ENCODE measurements at regions of chr19 and their contacts with region 1.

Region 1: DNA sequence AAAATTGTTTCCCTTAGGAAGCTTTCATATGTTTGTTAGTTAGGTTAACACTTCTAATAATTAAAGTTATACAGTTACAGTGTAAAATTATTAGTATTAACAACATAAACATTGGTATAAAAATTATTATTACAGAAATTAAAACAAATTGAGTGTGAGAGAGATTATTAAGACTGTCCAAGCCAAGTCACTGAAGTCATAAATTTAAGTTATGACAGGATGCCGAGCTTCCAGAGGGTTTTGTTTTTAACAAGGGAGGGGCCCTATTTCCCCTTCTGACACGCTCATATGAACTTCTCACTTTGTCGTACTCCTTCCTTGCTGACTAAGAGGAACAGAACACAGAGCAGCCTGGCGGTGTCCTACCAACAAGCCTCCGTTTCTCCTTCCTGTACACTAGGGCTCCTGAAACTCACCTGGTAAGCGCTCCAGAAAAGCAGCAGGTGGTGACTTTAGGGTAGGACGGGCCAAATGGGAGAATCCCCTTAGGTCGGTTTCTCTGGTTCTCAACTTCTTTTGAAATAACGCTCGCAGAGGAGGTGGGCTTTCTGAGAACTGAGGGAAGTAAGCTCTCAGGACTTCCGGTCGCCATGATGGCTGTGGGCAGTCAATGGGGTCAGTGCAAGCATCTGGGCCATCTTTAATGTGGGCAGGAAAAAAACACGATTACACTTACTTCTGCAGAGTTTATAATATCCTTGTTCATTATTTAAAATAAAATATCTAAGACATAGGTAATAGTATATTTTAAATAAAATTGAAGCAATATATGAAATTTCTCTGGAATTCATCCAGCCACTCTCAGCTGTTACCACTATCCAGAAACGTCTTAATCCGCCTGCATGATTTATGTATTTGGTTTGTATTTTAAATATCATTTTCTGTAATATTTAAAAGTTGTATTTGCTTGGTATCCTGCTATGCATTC is at the start of gene CARD8:
- DNase-seq: peak; percentile 43 to 92
- H3K4me3 ChIP-seq: peak within 1 kb of the TSS; percentile 71 to 79
- H3K27ac ChIP-seq: peak within 1 kb of the TSS; percentile 90 to 91
- H3K4me1 ChIP-seq: peaks cover 0 to 15% of the 10 kb centered on the region in 2 donors
- H3K27me3 ChIP-seq: no peaks in the 10 kb centered on the region
- CTCF ChIP-seq: no peak
- total RNA-seq, gene CARD8: 41.0 TPM

Region 2: GRCh38 chr19:48110350-48110966 is 145.2 kb before region 1 on chr19 and contains the start of gene PLA2G4C:
- intact Hi-C with region 1: loop called (anchors 5 kb)
- DNase-seq: peak; percentile 75 to 95
- H3K4me3 ChIP-seq: peak within 1 kb of the TSS; percentile 56 to 59
- H3K27ac ChIP-seq: peak within 1 kb of the TSS; percentile 91 to 93
- H3K4me1 ChIP-seq: peaks cover 0 to 17% of the 10 kb centered on the region in 2 donors
- H3K27me3 ChIP-seq: no peaks in the 10 kb centered on the region
- CTCF ChIP-seq: no peak
- total RNA-seq, gene PLA2G4C: 110 TPM

Region 3: GRCh38 chr19:48170038-48170812 is 85.4 kb before region 1 on chr19 and contains the starts of genes LIG1 and ZSWIM9:
- intact Hi-C with region 1: loop called (anchors 2 kb)
- DNase-seq: peak; percentile 65 to 93
- H3K4me3 ChIP-seq: peak within 1 kb of the TSS; percentile 65 to 85
- H3K27ac ChIP-seq: peak within 1 kb of the TSS; percentile 82 to 88
- H3K4me1 ChIP-seq: peaks cover 3 to 7% of the 10 kb centered on the region in 2 donors
- H3K27me3 ChIP-seq: no peaks in the 10 kb centered on the region
- CTCF ChIP-seq: peak in 1 of 3 experiments; percentile 14
- total RNA-seq, gene LIG1: 0.64 TPM
- total RNA-seq, gene ZSWIM9: 16.0 TPM

Region 4: DNA sequence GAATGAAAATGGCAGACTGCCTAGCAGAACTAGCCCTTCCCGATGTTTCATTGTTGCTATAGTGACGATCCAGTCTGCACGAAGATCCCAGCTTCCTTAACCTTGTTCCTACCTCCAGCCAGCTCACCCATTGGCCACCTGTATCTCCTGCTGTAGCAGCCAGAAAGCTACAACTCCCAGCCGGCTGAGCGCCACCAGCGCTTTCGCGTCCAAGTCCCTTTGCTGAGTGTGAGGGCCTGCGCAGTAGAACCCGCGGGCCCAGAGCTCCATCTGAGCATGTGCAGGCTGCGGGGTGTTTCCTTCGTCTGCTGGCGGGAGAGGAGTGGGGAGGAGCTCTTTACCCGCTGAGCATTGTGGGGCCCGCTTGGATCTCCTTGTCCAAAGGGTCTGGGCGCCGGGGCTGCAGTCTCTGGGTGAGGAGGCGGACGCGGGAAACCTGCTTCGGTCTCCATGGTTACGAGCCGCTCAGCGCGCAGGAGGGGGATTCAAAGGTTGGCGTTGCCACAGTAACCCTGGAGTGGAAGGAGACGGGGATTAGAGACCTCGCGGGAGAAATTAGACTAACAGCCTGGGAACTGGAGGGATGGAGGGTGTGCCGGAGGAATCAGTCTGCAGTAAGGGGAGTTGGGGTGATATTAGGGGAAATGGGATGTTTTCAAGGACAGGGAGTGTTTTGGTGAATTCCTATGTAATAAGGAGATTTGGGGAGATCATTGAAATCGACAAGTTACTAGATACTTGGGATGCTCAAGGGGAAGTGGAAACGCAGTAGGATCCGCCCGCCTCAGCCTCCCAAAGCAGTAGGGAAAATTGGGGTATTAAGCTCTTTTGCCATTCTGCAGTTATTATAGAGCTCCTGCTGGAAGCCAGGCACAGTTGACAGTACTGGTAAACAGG is 51.7 kb before region 1 on chr19:
- intact Hi-C with region 1: loop called (anchors 2 kb)
- DNase-seq: peak; percentile 68 to 96
- H3K4me3 ChIP-seq: peak overlapping the region; percentile 50 to 88
- H3K27ac ChIP-seq: peak overlapping the region; percentile 43 to 53
- H3K4me1 ChIP-seq: peaks cover 0 to 5% of the 10 kb centered on the region in 2 donors
- H3K27me3 ChIP-seq: no peaks in the 10 kb centered on the region
- CTCF ChIP-seq: no peak